ENCODE measurements at regions of chr18 and their contacts with region 1.

Region 1: GRCh38 chr18:28176933-28177827 is at the start of gene CDH2:
- DNase-seq: peak; percentile 65 to 66
- ATAC-seq: peak; percentile 48 to 76 (median 65)
- H3K4me3 ChIP-seq: peak within 1 kb of the TSS; percentile 36 to 80 (median 67)
- H3K27ac ChIP-seq: peak within 1 kb of the TSS; percentile 65 to 98 (median 88)
- H3K4me1 ChIP-seq: peaks cover 0 to 15% (median 8%) of the 10 kb centered on the region in 9 donors
- H3K27me3 ChIP-seq: peaks cover 0 to 79% (median 17%) of the 10 kb centered on the region in 7 donors
- CTCF ChIP-seq: peak in 4 of 9 donors; percentile 11 to 44 (median 26)
- total RNA-seq, gene CDH2: 325 to 575 (median 518) TPM

Region 2: DNA sequence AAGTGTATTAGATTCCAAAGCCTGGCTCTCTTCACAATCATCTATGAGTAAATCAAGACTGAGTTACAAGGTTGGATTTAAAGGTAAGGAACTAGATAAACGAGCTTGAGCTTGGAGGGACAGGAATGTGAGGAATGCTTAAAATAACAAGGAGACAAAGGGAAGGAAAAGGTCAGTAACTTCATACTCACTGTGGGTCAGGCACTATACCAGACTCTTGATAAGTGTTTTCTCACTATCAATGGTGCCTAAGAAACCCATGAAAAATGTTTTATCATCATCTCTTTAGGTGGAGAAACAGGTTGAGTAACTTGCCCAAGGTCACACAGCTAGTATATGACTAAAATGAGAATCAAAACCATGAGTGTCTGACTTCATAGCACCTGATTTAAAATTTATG is 212.4 kb before region 1 on chr18:
- intact Hi-C with region 1: loop called in 1 of 10 experiments (anchors 10 kb)
- DNase-seq: no peak
- ATAC-seq: no peak
- H3K4me3 ChIP-seq: no peak overlapping the region
- H3K27ac ChIP-seq: no peak overlapping the region
- H3K4me1 ChIP-seq: peaks cover 0 to 37% (median 0%) of the 10 kb centered on the region in 9 donors
- H3K27me3 ChIP-seq: no peaks in the 10 kb centered on the region
- CTCF ChIP-seq: no peak

Region 3: DNA sequence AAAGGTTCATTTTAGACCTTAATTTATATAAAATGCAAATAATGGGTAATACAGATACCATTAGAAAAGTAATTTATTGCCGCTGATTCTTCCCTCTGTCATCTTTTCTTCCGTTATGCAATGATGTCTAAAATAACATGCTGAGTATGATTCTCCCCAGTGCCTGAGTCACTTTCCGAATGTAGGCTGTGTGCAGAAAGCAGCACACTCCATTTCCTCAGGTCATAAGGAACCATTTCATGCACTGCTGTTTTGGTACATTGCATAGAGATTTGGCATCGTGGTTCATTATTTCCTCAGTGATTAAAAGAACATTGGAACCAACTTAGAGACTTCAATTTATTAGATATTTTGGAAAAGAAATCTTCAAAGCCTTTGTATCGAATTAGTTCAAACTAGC is 173.7 kb before region 1 on chr18:
- intact Hi-C with region 1: loop called in 3 of 10 experiments (anchors 10 kb)
- DNase-seq: no peak
- ATAC-seq: peak in 6 of 8 donors; percentile 63 to 88 (median 82)
- H3K4me3 ChIP-seq: no peak overlapping the region
- H3K27ac ChIP-seq: peak overlapping the region in 7 of 10 donors; percentile 8 to 71 (median 48)
- H3K4me1 ChIP-seq: peaks cover 0 to 33% (median 5%) of the 10 kb centered on the region in 9 donors
- H3K27me3 ChIP-seq: no peaks in the 10 kb centered on the region
- CTCF ChIP-seq: no peak

Region 4: GRCh38 chr18:28019425-28020108 is 157.6 kb before region 1 on chr18:
- intact Hi-C with region 1: loop called in 1 of 10 experiments (anchors 5 kb)
- DNase-seq: no peak
- ATAC-seq: no peak
- H3K4me3 ChIP-seq: no peak overlapping the region
- H3K27ac ChIP-seq: no peak overlapping the region
- H3K4me1 ChIP-seq: peaks cover 0 to 6% (median 0%) of the 10 kb centered on the region in 9 donors
- H3K27me3 ChIP-seq: no peaks in the 10 kb centered on the region
- CTCF ChIP-seq: no peak

Region 5: DNA sequence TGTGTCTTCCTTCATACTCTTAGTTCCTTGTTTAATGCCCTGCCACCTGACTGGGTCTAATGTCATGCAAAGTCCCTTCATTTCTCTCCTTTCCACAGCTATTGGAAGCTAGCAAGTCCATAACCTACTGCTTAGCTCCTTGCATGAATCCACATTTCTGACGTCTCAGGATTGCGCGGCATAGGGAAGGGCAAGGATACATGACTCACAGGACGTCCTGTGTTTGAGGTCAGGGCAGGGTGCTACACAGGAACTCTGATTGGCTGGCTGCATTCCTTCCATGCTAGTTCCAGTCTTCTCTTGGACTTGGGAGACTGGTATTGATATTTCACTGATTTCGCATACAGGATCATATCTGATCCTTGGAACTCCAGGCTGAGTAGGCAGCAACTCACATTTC is 138.1 kb before region 1 on chr18:
- intact Hi-C with region 1: loop called in 1 of 10 experiments (anchors 10 kb)
- DNase-seq: no peak
- ATAC-seq: peak in 6 of 8 donors; percentile 38 to 73 (median 51)
- H3K4me3 ChIP-seq: no peak overlapping the region
- H3K27ac ChIP-seq: peak overlapping the region in 2 of 10 donors; percentile 0 to 8
- H3K4me1 ChIP-seq: peaks cover 0 to 53% (median 13%) of the 10 kb centered on the region in 9 donors
- H3K27me3 ChIP-seq: no peaks in the 10 kb centered on the region
- CTCF ChIP-seq: no peak

Region 6: DNA sequence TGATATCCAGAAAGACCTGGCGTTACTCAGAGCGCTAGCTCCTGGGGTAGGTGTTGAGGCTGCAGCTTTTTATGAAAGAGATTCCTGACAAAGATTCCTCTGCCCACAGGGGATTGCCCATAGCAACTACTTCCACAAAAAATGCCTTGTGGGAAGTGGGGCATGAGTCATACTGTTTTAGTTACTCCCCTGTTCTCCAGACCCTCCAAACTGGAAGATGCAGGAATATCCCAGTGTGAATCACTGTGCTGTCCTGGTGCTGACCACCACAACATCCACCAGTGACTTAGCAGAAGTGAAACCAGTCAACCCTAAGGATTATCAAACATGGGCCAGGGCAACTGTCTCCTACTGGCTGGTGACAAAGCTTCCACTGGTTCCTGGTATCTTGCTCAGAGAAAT is 62.0 kb before region 1 on chr18:
- intact Hi-C with region 1: loop called in 7 of 10 experiments (anchors 5 to 10 kb)
- DNase-seq: no peak
- ATAC-seq: peak in 1 of 8 donors; percentile 18
- H3K4me3 ChIP-seq: no peak overlapping the region
- H3K27ac ChIP-seq: peak overlapping the region in 9 of 10 donors; percentile 35 to 88 (median 85)
- H3K4me1 ChIP-seq: peaks cover 0 to 79% (median 37%) of the 10 kb centered on the region in 9 donors
- H3K27me3 ChIP-seq: no peaks in the 10 kb centered on the region
- CTCF ChIP-seq: no peak

Region 7: DNA sequence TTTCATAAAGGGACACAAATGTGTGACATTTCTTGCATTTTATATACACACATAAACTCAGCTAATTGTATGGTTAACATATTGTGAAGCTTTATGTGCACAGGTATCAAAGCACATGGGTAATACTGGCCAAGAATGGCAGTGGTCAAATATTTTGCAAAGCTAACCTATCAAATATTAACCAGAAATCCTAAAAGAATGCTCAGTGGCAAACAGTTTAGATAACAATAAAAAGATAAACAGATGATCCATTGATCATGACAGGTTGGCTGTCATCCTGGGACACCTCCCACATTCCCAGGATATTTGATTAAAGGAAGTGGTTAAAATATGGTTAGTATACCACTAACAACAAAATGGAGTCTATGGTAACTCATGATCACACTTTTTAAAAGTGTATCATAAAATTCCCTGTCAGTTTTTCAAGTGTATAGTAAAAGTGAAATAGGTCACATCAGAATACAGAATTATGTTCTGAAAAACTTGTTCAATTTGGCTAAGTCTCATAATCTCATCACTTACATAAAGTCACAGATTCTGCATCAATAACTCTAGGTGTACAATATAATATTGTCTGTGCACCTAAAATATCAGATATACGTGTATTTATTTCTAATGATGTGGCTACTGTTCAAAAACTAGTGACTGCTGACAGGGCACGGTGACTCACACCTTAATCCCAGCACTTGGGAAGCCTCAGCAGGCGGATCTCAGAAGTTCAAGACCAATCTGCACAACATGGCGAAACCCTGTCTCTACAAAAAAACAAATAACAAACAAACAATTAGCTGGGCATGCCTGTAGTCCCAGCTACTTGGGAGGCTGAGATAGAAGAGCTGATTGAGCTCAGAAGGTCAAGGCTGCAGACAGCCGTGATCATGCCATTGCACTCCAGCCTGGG is 49.2 kb before region 1 on chr18:
- intact Hi-C with region 1: loop called in 1 of 10 experiments (anchors 5 kb)
- DNase-seq: no peak
- ATAC-seq: peak in 6 of 8 donors; percentile 27 to 41 (median 33)
- H3K4me3 ChIP-seq: no peak overlapping the region
- H3K27ac ChIP-seq: peak overlapping the region; percentile 8 to 92 (median 78)
- H3K4me1 ChIP-seq: peaks cover 2 to 86% (median 45%) of the 10 kb centered on the region in 9 donors
- H3K27me3 ChIP-seq: no peaks in the 10 kb centered on the region
- CTCF ChIP-seq: no peak

Region 8: GRCh38 chr18:28350821-28351220 is 173.6 kb after region 1 on chr18:
- intact Hi-C with region 1: no loop called
- DNase-seq: no peak
- ATAC-seq: no peak
- H3K4me3 ChIP-seq: no peak overlapping the region
- H3K27ac ChIP-seq: no peak overlapping the region
- H3K4me1 ChIP-seq: no peaks in the 10 kb centered on the region
- H3K27me3 ChIP-seq: no peaks in the 10 kb centered on the region
- CTCF ChIP-seq: no peak

Measured in heart right ventricle (tissue), 16 donors.